ENCODE measurements at regions of chr20 and their contacts with region 1.

Region 1: DNA sequence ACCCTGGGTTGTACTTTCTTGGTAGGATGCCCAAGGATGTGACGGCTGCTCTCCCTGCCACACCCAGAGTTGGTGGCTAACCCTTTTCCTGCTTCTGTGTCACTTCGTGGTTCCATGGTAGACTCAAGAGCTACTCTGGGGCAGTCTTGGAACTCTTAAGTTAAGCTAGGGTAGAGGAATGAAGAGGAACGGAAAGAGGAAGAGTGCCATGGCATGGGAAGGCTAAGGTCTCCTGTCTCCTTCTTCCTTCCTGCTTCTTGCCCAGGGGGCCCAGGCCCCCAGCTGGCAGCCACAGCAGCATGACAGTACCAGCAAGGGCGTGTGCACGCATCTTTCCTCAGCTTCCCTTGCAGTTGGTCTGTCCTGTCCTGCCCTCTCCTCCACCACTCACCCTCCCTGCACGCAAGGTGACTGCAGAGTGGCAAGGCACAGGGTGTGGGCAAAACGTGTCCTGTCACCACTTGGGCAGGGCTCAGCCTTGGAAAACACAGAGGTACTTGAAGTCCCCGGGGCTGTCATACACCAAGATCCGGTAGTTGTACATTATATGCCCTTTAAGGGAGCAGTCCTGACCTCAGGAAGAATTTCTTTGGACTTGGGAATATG is 39.8 kb upstream of the TGM3 start:
- DNase-seq: no peak
- ATAC-seq: no peak
- H3K4me3 ChIP-seq: no peak overlapping the region
- H3K27ac ChIP-seq: no peak overlapping the region
- H3K4me1 ChIP-seq: peaks cover 0 to 25% (median 0%) of the 10 kb centered on the region in 9 donors
- H3K27me3 ChIP-seq: peaks cover 0 to 39% (median 0%) of the 10 kb centered on the region in 7 donors
- CTCF ChIP-seq: no peak

Region 2: DNA sequence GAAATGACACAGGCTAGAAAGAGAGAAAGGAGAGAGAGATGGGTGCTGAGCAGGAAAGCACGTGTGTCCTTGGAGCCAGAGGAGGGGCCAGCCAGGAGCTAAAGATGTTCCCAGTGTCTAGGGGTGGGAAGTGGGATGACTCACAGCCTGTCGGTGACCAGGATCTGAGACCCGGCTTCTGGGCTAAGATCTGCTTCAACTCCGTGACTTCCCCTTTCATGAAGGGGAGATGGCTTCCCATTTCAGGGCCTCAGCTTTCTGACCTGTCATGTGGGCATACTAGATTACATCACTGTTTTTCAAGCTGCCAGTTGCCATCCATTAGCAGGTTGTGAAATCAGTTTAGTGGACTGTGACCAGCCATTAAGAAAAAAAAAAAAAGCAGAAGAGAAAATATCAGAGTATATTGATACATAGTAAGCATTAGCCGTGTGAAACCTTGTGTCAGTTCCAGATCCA is 45.2 kb after region 1 on chr20:
- intact Hi-C with region 1: loop called in 1 of 10 experiments (anchors 10 kb)
- DNase-seq: peak in 1 of 2 donors; percentile 42
- ATAC-seq: peak; percentile 38 to 80 (median 72)
- H3K4me3 ChIP-seq: no peak overlapping the region
- H3K27ac ChIP-seq: peak overlapping the region in 2 of 10 donors; percentile 12 to 87
- H3K4me1 ChIP-seq: peaks cover 0 to 36% (median 0%) of the 10 kb centered on the region in 9 donors
- H3K27me3 ChIP-seq: peaks cover 0 to 48% (median 17%) of the 10 kb centered on the region in 7 donors
- CTCF ChIP-seq: no peak

Measured in heart right ventricle (tissue), 16 donors.